Activated naive CD4-positive, alpha-beta T cell treated with anti-CD3 and anti-CD28 coated beads for 36 hours (primary cell): ENCODE measurements at regions of chrX and their contacts with region 1.

Region 1: GRCh38 chrX:87299563-87300160 is 217.9 kb upstream of the KLHL4 start:
- DNase-seq: no peak
- H3K4me3 Mint-ChIP-seq: no peak overlapping the region
- H3K27ac Mint-ChIP-seq: no peak overlapping the region
- H3K4me1 Mint-ChIP-seq: no peaks in the 10 kb centered on the region
- H3K27me3 Mint-ChIP-seq: no peaks in the 10 kb centered on the region

Region 2: DNA sequence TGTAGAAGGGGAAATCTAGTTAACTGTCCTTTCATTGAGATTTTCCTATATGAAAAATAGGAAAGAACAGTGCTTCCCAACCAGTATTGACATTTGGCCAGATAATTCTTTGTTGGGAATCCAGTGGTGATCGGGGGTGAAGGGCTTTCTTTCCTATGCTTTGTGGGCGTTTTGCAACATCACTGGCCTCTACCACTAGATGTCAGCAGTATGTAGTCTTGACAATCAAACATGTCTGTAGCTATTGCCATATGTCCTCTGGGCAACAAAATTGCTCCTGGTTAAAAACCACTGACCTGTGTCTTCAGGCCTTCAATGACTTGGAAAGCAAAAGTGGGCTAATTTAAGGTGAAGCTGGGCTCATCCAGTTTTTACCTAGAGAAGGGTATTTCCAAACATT is 492.9 kb before region 1 on chrX:
- CTCF ChIA-PET with region 1: no interaction called
- intact Hi-C with region 1: loop called (anchors 5 kb)
- DNase-seq: peak; percentile 2
- H3K4me3 Mint-ChIP-seq: no peak overlapping the region
- H3K27ac Mint-ChIP-seq: no peak overlapping the region
- H3K4me1 Mint-ChIP-seq: no peaks in the 10 kb centered on the region
- H3K27me3 Mint-ChIP-seq: no peaks in the 10 kb centered on the region